Pancreas (tissue), 10 donors: ENCODE measurements at regions of chr6 and their contacts with region 1.

Region 1: DNA sequence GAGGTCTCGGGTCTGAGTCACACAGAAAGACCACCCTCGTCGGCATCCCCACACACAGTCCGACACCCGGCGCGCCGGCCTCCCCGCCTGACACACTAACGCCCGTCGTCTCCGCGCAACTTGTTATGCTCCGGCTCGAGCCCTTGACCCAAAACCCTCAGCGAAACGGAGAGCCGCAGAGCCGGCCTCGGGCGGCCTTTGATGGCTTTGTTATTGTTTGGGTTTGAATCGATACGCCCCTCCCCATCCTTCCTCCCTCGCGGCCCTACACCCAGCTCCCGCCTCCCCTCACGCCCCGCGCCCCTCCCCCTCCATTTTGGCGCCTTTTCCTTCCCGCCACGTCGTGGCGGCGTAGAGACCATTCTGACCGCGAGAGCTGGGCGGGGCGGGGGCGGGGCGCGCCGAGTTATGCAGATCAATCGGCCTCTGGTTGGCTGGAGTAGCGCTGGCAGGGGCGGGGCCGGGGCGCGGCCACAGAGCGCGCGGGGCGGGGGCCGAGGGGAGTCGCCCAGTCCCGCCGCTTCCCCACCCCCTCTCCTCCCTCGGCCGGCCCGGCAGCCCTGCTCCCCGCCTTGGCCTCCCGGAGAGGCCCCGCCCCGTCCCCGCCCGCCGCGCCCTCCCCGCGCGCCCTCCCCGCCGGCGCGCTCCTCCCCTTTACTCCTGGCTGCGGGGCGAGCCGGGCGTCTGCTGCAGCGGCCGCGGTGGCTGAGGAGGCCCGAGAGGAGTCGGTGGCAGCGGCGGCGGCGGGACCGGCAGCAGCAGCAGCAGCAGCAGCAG is at the start of gene PIM1:
- DNase-seq: peak; percentile 99 to 100 (median 99)
- ATAC-seq: peak; percentile 80 to 89 (median 88)
- H3K4me3 ChIP-seq: peak within 1 kb of the TSS; percentile 81 to 98 (median 96)
- H3K27ac ChIP-seq: peak within 1 kb of the TSS; percentile 64 to 87 (median 82)
- H3K4me1 ChIP-seq: peaks cover 0 to 13% (median 9%) of the 10 kb centered on the region in 3 donors
- H3K27me3 ChIP-seq: no peaks in the 10 kb centered on the region
- CTCF ChIP-seq: no peak
- total RNA-seq, gene PIM1: 7.5 to 25.3 (median 14.1) TPM

Region 2: DNA sequence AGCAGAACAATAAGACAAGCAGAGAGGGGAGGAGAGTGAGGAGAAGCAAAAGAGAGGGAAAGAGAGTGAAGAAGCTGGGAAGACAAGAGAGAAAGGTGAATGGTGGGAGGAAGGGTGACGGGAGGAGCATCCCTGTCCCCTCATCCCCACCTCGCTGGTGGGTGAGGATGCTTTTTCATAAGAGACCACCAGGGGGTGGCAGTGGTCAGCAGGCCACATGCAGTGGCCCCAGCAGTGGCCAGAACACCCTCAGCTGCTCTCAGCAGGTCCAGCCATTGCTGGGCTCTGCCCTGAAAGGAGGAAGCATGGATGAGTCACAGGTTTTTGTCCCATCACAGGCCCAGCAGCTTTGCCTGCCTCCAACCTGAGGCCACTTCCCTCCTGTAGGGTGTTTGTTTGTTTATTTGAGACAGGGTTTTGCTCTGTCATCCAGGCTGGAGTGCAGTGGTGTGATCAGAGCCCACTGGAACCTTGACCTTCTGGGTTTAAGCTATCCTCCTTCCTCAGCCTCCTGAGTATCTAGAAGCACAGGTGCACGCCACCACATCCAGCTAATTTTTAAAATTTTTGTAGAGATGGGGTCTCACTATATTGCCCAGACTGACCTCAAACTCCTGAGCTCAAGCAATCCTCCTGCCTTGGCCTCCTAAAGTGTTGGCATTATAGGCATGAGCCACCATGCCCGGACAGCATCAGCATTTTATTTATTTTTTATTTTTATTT is 140.3 kb before region 1 on chr6:
- intact Hi-C with region 1: loop called in 2 of 3 experiments (anchors 5 to 10 kb)
- DNase-seq: peak in 5 of 6 donors; percentile 74 to 79 (median 77)
- ATAC-seq: peak; percentile 81 to 96 (median 92)
- H3K4me3 ChIP-seq: no peak overlapping the region
- H3K27ac ChIP-seq: peak overlapping the region in 1 of 4 donors; percentile 12
- H3K4me1 ChIP-seq: peaks cover 0 to 10% (median 0%) of the 10 kb centered on the region in 3 donors
- H3K27me3 ChIP-seq: no peaks in the 10 kb centered on the region
- CTCF ChIP-seq: peak in 3 of 4 donors; percentile 64 to 79 (median 65)